Spleen (tissue), 13 donors: ENCODE measurements at regions of chr2 and their contacts with region 1.

Region 1: DNA sequence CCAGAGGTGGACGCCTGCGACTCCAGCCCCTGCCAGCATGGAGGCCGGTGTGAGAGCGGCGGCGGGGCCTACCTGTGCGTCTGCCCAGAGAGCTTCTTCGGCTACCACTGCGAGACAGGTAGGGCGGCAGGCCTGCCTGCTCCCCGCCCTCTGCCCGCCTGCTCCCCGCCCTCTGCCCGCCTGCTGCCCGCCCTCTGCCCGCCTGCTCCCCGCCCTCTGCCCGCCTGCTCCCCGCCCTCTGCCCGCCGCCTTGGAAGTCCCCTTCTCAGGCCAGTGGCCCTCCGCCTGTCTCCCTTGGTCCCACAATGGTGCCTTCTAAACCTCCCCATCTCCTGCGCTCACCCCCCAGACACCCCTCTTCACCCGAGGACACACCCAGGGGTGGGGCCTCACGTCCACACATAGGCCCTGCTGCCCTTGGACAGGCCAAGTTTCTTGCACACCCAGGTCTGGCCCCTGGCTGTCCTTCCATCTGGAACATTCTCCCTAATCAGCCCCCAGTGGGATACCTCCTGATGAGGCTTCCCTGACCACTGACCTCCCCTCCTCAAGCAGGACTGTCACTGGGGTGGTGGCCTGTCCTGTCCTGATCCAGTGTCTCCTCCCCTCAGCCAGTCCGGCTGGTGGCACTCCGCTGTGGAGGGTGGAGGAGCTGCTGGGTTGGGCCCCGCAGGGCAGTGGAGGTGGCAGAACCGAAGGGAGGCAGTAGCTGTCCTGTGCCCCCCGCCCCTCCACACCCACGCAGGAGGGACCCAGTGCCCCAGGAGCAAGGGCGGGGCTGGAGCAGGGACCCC is 37.9 kb downstream of the MTERF4 start:
- DNase-seq: peak; percentile 83
- H3K4me3 ChIP-seq: peak overlapping the region in 1 of 8 donors; percentile 43
- H3K27ac ChIP-seq: no peak overlapping the region
- H3K4me1 ChIP-seq: peaks cover 0 to 19% (median 8%) of the 10 kb centered on the region in 6 donors
- H3K27me3 ChIP-seq: peaks cover 0 to 12% (median 0%) of the 10 kb centered on the region in 7 donors
- CTCF ChIP-seq: no peak
- POLR2A ChIP-seq: no peak

Region 2: DNA sequence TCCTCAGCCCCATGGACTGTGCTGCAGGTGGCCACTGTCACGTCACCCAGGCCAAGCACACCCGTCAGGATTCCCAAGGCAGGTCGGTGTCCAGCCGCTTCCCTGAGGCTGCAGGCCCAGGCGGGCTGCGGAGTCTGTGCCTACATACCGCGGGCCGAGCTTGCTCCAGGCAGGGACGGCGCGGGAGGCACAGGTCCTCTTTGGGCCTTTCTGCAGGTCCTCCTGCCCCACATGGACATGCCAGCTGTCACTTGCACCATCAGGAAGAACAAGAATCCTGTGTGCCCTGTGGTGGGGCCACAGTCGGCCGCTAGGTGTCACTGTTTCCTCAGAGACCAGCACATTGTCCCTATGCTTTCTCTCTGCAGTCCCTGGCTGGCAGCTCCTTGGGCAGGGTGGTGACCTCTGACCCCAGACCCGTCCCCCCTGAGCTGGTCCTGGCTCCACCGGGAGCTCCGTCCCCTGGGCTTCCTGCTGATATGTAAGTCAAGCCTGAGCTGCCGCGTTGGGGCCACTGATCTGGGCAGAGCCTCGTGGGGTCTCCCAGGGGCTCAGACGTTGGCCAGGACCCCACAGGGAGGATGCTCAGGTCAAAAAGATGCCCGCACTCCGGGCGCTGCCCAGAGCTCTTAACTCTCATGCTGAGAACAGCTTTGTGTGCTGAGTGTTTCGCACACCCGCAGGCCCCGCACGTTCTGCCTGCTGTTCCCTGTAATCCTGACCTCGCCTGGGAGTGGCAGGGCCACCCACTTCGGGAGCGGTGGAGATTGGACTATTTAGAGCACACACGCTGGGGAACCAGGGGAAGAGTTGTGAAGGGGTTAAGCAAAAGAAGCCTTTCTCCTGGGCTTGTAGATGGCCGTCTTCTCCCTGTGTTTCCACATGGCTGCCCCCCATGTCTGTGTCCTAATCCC is 212.9 kb before region 1 on chr2:
- intact Hi-C with region 1: loop called (anchors 10 kb)
- DNase-seq: peak; percentile 91
- H3K4me3 ChIP-seq: no peak overlapping the region
- H3K27ac ChIP-seq: no peak overlapping the region
- H3K4me1 ChIP-seq: peaks cover 0 to 10% (median 3%) of the 10 kb centered on the region in 6 donors
- H3K27me3 ChIP-seq: peaks cover 0 to 9% (median 0%) of the 10 kb centered on the region in 7 donors
- CTCF ChIP-seq: peak; percentile 86 to 99 (median 94)
- POLR2A ChIP-seq: no peak

Region 3: GRCh38 chr2:240933048-240933965 is 130.9 kb before region 1 on chr2:
- intact Hi-C with region 1: no loop called
- DNase-seq: peak; percentile 73
- H3K4me3 ChIP-seq: peak overlapping the region in 1 of 8 donors; percentile 26
- H3K27ac ChIP-seq: peak overlapping the region in 1 of 8 donors; percentile 16
- H3K4me1 ChIP-seq: peaks cover 0 to 13% (median 0%) of the 10 kb centered on the region in 6 donors
- H3K27me3 ChIP-seq: peaks cover 0 to 9% (median 0%) of the 10 kb centered on the region in 7 donors
- CTCF ChIP-seq: no peak
- POLR2A ChIP-seq: no peak